Activated CD4-positive, alpha-beta T cell treated with anti-CD3 and anti-CD28 coated beads, Interleukin-2, amount 10 ng/mL, durations not matched to agents 24 days and 14 days (primary cell): ENCODE measurements at regions of chr14 and their contacts with region 1.

Region 1: DNA sequence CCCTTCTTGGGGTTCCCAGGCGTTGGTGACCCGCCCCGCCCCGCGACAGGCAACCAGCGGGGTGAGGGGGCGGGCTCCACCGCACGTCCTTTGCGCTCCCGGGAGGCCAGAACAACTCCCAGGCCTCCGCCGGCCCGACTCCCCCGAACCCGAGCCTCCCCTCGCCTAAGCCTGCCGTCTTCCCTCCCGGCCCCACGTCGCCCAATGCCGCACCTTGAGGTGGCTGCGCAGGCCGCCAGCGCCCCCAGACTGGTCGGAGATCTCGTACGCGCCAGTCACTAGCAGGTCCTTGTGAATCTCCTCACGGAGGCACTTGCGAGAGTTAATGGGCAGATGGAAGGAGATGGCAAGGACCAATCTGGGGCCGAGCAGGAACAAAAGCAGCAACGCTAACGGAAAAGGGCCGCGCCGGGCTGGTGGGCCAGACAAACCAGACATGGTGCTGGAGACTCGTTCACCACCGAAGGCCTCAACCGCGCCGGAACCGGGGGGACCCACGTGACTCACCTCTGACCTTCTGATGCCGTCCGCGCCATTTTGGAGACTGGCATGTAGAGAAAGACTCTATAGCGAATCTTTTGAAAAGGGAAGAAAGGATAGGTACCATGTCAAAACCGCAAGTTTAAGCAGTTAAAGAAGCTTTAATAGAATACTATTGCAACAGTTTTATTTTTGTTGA is at the start of gene TMED10:
- DNase-seq: peak; percentile 97
- H3K4me3 Mint-ChIP-seq: peak within 1 kb of the TSS; percentile 92
- H3K27ac Mint-ChIP-seq: peak within 1 kb of the TSS; percentile 98
- H3K4me1 Mint-ChIP-seq: peaks cover 27% of the 10 kb centered on the region
- H3K27me3 Mint-ChIP-seq: peaks cover 8% of the 10 kb centered on the region
- total RNA-seq, gene TMED10: 192 and 200 TPM in 2 replicates

Region 2: GRCh38 chr14:74793506-74794168 is 382.6 kb before region 1 on chr14:
- intact Hi-C with region 1: no loop called
- DNase-seq: peak; percentile 75
- H3K4me3 Mint-ChIP-seq: peak overlapping the region; percentile 80
- H3K27ac Mint-ChIP-seq: peak overlapping the region; percentile 84
- H3K4me1 Mint-ChIP-seq: peaks cover 39% of the 10 kb centered on the region
- H3K27me3 Mint-ChIP-seq: no peaks in the 10 kb centered on the region

Region 3: DNA sequence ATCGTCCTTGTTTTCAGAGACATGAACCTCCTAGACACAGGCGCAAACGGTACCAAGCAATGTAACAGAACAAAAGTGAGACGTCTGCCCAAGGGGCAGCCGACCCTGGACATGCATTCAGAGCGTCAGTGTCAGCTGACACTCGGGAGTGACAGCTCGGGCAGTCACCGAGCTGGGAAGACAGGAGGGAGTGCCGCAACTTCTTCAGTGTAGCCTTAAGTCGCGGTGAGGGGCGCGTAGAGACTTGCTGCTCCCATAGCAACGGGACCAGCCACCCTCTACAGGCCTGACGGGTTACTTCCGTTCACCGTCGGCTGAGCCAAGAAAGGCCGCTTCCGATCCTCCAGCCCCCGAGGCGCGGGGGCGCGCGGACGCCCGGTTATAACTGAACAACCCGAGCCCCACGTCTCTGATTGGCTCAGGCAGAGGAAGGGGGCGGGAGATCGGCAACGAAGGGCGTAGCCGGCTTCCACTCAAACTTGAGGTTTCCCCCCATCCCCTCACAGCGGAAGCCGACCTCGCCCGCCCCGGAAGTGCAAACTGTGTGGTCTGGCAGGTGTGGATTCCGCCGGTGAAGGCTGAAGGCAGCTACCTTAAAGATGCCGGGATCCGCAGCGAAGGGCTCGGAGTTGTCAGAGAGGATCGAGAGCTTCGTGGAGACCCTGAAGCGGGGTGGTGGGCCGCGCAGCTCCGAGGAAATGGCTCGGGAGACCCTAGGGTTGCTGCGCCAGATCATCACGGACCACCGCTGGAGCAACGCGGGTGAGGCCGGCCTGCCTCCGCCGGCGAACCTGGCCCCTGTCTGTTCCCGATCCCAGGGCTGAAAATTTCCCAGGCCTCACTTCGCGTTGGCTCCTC is 173.7 kb before region 1 on chr14 and contains the start of gene EIF2B2:
- intact Hi-C with region 1: loop called (anchors 2 kb)
- DNase-seq: peak; percentile 100
- H3K4me3 Mint-ChIP-seq: peak within 1 kb of the TSS; percentile 99
- H3K27ac Mint-ChIP-seq: peak within 1 kb of the TSS; percentile 94
- H3K4me1 Mint-ChIP-seq: peaks cover 35% of the 10 kb centered on the region
- H3K27me3 Mint-ChIP-seq: peaks cover 8% of the 10 kb centered on the region
- total RNA-seq, gene EIF2B2: 51.6 and 53.3 TPM in 2 replicates

Region 4: DNA sequence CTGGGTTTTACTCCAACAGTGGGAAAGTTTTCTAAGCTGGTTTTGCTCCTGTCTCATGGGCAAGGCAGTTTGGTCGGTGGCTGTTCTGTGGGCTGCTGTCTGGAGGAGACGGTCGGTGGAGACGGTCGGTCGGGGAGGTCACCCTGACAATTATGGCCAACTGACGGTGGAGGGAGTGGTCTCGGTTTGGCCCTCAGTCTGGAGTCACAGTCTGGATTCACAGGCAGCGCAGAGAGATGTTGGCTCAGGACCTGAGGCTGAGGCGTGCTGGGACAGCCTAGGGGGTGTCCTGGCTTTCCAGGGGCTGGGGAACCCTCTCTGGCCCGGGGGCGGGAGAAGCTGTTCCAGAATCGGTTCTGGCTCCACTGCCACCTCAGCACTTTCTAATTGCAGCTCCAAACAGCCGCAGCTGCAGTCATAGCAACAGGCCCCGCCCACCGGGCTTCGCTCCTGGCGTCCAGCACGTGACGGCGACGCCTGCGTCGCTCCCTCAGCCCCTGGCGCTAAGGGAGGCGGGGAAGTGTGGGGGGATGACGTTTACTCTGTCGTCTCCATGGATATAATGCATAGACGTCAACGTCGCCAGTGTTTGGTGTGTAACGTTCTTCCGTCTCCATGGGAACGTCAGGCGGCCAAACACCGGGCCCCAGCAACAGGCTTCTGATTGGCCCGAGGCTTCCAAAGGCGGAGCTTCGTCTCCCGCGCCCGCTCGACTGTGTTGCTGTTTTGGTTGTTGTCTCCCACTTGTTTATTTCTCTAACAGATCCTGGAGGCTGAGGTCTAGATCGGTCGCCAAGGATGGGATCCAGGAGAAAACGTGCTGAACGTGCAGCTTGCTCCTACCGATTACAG is 82.6 kb after region 1 on chr14:
- intact Hi-C with region 1: loop called (anchors 1 kb)
- DNase-seq: peak; percentile 100
- H3K4me3 Mint-ChIP-seq: peak overlapping the region; percentile 85
- H3K27ac Mint-ChIP-seq: peak overlapping the region; percentile 99
- H3K4me1 Mint-ChIP-seq: peaks cover 17% of the 10 kb centered on the region
- H3K27me3 Mint-ChIP-seq: peaks cover 54% of the 10 kb centered on the region

Region 5: GRCh38 chr14:75278422-75279161 is 102.3 kb after region 1 on chr14 and contains the start of gene FOS:
- intact Hi-C with region 1: loop called (anchors 1 kb)
- DNase-seq: peak; percentile 97
- H3K4me3 Mint-ChIP-seq: peak within 1 kb of the TSS; percentile 88
- H3K27ac Mint-ChIP-seq: peak within 1 kb of the TSS; percentile 98
- H3K4me1 Mint-ChIP-seq: peaks cover 40% of the 10 kb centered on the region
- H3K27me3 Mint-ChIP-seq: peaks cover 53% of the 10 kb centered on the region
- total RNA-seq, gene FOS: 26.5 and 29.6 TPM in 2 replicates

Region 6: DNA sequence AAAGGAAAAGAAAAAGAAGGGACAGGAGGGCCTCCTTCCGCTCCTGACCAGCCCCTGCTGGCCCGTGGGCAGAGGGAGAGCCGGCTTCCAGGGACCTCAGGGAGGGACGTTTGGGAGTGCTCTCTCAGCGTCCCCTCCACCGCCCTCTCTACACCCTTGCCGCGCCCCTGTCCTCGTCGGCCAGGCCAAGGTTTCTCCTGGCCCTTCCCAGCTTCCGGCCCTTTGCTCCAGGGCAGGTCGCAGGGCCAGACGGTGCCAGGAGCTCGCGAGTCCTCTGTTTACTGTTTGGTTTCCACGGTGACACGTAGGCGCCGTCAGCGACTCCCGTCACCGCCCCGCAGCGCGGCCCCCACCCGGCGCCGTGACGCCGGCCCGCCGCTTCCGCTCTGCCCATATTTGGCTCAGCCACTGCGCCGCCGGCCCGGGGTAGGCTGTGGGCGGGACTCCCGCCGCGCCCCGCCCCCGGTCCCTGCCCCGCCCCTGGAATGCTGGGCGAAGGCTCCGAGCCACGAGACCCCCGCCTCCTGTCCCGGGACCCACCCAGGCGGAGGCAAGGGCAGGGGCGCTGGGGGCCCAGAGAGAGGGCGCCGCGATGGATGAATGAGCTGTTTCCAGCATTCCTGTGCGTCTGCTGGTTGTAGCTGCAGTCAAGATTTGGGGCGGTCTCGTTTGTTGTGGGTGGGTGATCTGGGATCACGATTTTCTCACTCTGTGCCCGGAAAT is 117.8 kb after region 1 on chr14:
- intact Hi-C with region 1: loop called (anchors 1 kb)
- DNase-seq: peak; percentile 98
- H3K4me3 Mint-ChIP-seq: peak overlapping the region; percentile 88
- H3K27ac Mint-ChIP-seq: peak overlapping the region; percentile 95
- H3K4me1 Mint-ChIP-seq: peaks cover 18% of the 10 kb centered on the region
- H3K27me3 Mint-ChIP-seq: peaks cover 20% of the 10 kb centered on the region

Region 7: GRCh38 chr14:75323571-75323970 is 147.3 kb after region 1 on chr14:
- intact Hi-C with region 1: no loop called
- DNase-seq: no peak
- H3K4me3 Mint-ChIP-seq: no peak overlapping the region
- H3K27ac Mint-ChIP-seq: no peak overlapping the region
- H3K4me1 Mint-ChIP-seq: no peaks in the 10 kb centered on the region
- H3K27me3 Mint-ChIP-seq: peaks cover 17% of the 10 kb centered on the region

Region 8: GRCh38 chr14:75660630-75661494 is 484.6 kb after region 1 on chr14 and contains the starts of genes ERG28 and TTLL5:
- intact Hi-C with region 1: loop called (anchors 2 kb)
- DNase-seq: peak; percentile 99
- H3K4me3 Mint-ChIP-seq: peak within 1 kb of the TSS; percentile 95
- H3K27ac Mint-ChIP-seq: peak within 1 kb of the TSS; percentile 92
- H3K4me1 Mint-ChIP-seq: peaks cover 21% of the 10 kb centered on the region
- H3K27me3 Mint-ChIP-seq: no peaks in the 10 kb centered on the region
- total RNA-seq, gene ERG28: 20.3 and 20.6 TPM in 2 replicates
- total RNA-seq, gene TTLL5: 31.7 and 35.5 TPM in 2 replicates

Region 9: DNA sequence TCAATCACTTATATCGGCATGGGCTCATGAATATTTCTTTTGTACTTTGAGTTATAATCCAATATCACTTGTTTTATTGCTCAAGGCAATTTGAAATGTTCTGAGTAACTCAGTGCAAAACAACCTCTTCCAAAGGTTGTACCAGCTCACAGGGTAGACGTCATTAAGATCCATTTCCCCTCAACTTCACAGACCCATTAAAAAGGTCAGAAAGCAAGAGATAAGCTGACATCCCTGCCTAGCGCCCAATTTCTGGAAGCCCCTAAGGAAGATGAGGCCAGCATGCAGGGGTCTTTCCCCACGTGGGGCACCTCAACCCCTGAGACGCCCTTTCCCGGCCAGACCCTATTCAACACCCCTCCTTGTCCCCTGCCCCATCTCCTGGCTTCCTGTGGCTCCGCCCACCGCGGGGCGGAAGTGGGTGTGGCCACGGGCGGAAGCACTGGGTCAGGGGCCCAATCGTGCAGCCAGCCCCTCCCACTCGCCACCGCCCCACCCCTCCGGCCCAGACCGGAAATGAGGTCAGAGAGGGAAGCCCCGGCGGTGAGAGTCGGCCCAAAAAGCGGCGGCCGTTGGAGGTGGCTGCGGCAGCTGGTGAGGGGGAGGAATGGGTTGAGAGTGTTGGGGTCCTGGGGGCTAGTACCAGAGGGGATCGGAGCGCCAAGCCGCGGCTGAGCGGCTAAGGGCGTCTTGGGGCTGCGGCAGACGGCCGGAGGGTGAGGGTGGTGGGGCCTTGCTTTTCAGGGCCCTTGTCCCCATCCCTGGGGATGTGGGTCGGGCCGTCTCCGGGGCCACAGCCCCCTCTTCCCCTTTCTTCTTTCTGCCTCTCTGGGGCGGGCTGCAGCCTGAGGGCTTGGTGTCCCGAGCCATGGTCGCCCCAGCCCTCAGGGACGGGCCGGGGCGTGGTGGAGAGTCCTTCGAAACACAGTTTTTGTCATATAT is 975.4 kb after region 1 on chr14 and contains the start of gene GPATCH2L:
- intact Hi-C with region 1: loop called (anchors 10 kb)
- DNase-seq: peak; percentile 99
- H3K4me3 Mint-ChIP-seq: peak within 1 kb of the TSS; percentile 88
- H3K27ac Mint-ChIP-seq: peak within 1 kb of the TSS; percentile 99
- H3K4me1 Mint-ChIP-seq: peaks cover 44% of the 10 kb centered on the region
- H3K27me3 Mint-ChIP-seq: peaks cover 5% of the 10 kb centered on the region
- total RNA-seq, gene GPATCH2L: 60.6 and 61.6 TPM in 2 replicates